ENCODE measurements at regions of chrX and their contacts with region 1.

Region 1: DNA sequence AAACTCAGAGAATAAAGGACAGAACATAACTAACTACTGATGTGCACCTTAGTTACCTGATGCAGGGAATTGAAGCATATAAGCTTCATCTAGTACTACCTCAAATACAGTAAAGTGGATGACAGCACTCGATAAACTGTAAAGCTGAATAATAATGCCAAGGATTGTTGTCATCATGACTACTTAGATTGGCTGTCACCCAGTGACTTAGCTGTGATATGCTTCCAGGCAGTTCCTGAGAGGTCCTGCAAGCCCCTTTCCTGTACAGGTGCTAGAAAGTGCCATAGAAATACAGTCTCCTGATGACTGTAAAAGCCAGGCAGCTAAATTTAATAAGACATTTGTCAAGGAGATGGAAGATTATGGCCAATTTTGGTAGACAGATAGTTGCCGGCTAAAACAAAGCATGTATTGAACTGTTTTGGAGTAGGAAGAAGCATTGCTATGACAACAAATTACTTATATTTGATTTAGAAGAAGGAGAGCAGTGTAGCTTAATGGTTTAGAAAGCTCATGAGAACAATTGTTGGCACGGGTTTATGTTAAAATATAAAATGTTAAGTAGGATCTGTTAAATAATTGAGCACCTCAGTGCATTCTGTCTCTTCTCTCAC is 29.7 kb downstream of the TMEM164 start:
- DNase-seq: no peak
- H3K4me3 Mint-ChIP-seq: no peak overlapping the region
- H3K27ac Mint-ChIP-seq: no peak overlapping the region
- H3K4me1 Mint-ChIP-seq: peaks cover 12% of the 10 kb centered on the region
- H3K27me3 Mint-ChIP-seq: peaks cover 57% of the 10 kb centered on the region
- CTCF ChIP-seq: no peak

Region 2: GRCh38 chrX:109312757-109313156 is 719.9 kb before region 1 on chrX:
- CTCF ChIA-PET with region 1: no interaction called
- POLR2A ChIA-PET with region 1: no interaction called
- intact Hi-C with region 1: no loop called
- DNase-seq: peak; percentile 20
- H3K4me3 Mint-ChIP-seq: no peak overlapping the region
- H3K27ac Mint-ChIP-seq: no peak overlapping the region
- H3K4me1 Mint-ChIP-seq: no peaks in the 10 kb centered on the region
- H3K27me3 Mint-ChIP-seq: peaks cover 75% of the 10 kb centered on the region
- CTCF ChIP-seq: no peak

Region 3: DNA sequence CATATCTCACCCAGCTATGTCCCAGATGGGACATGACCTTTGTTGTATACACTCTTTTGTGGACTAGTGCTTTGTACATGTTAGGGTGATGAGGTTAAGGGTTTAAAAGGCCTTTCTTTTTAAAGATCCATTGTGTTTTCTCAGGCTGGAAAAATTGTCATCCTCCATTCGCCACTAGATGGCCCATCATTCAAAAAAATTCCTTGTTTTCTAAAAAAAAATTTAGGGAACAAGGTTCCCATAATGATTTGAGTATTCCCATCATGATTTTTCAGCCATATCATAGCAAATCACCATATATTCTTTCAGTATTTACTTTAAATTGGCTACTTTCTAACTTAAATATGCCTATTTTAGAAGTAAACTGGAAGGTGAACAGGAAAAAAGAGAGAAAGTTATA is 121.6 kb before region 1 on chrX:
- CTCF ChIA-PET with region 1: interaction called, 10 read pairs
- POLR2A ChIA-PET with region 1: no interaction called
- intact Hi-C with region 1: no loop called
- DNase-seq: peak; percentile 20
- H3K4me3 Mint-ChIP-seq: no peak overlapping the region
- H3K27ac Mint-ChIP-seq: no peak overlapping the region
- H3K4me1 Mint-ChIP-seq: no peaks in the 10 kb centered on the region
- H3K27me3 Mint-ChIP-seq: peaks cover 50% of the 10 kb centered on the region
- CTCF ChIP-seq: peak; percentile 45

Region 4: GRCh38 chrX:110046001-110046400 is 13.4 kb after region 1 on chrX:
- CTCF ChIA-PET with region 1: interaction called, 10 read pairs
- POLR2A ChIA-PET with region 1: interaction called, 5 read pairs
- intact Hi-C with region 1: no loop called
- DNase-seq: no peak
- H3K4me3 Mint-ChIP-seq: no peak overlapping the region
- H3K27ac Mint-ChIP-seq: no peak overlapping the region
- H3K4me1 Mint-ChIP-seq: no peaks in the 10 kb centered on the region
- H3K27me3 Mint-ChIP-seq: peaks cover 75% of the 10 kb centered on the region
- CTCF ChIP-seq: no peak

Measured in MCF 10A (cell line).